ENCODE measurements at regions of chr16 and their contacts with region 1.

Region 1: DNA sequence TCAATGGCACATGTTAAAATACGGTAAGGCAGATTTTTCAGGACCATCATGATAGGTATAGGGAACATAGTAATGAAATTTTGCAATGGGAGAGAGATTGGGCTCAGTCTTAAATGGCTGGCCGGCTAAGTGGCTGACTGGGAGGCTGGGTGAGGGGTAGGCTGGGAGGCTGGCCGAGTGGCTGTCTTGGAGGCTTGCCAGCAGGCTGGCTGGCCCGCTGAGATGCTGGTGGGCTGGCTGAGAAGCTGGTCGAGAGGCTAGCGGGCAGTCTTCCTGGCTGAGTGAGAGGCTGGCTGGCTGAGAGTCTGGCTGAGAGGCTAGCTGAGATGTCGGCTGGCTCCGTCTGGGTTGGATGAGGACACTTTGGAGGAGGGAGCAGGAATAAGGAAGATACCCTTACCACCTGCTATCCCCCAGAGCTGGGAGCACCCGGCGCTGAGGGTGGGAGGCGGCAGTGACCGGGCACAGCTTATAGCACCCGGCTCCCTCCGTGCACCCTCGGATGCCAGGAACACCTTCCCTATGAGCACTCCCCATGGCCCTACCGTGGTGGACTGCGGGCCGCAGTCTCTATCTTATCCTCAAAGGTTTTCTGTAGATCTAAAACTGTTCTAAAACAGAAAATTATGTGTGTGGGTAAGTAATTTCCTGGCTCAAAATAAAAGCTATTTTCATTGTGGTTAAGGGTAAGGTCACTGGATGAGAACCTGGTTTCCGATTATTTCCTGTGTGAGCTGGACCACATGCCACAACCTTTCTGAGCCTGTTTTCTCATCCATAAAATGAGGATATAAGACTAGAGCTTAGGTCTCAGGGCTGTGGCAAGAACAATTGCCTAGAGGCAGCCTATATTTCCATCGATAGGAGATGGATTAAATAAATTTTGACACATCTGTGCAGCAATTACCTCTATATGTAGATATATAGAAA is 34.5 kb upstream of the TMC5 start:
- DNase-seq: peak; percentile 64
- H3K4me3 Mint-ChIP-seq: peak overlapping the region; percentile 22
- H3K27ac Mint-ChIP-seq: peak overlapping the region; percentile 11
- H3K4me1 Mint-ChIP-seq: peaks cover 35% of the 10 kb centered on the region
- H3K27me3 Mint-ChIP-seq: peaks cover 31% of the 10 kb centered on the region

Region 2: GRCh38 chr16:19114352-19115052 is 268.6 kb before region 1 on chr16:
- intact Hi-C with region 1: loop called (anchors 5 kb)
- DNase-seq: peak; percentile 73
- H3K4me3 Mint-ChIP-seq: peak overlapping the region; percentile 87
- H3K27ac Mint-ChIP-seq: peak overlapping the region; percentile 87
- H3K4me1 Mint-ChIP-seq: peaks cover 35% of the 10 kb centered on the region
- H3K27me3 Mint-ChIP-seq: peaks cover 9% of the 10 kb centered on the region

Region 3: DNA sequence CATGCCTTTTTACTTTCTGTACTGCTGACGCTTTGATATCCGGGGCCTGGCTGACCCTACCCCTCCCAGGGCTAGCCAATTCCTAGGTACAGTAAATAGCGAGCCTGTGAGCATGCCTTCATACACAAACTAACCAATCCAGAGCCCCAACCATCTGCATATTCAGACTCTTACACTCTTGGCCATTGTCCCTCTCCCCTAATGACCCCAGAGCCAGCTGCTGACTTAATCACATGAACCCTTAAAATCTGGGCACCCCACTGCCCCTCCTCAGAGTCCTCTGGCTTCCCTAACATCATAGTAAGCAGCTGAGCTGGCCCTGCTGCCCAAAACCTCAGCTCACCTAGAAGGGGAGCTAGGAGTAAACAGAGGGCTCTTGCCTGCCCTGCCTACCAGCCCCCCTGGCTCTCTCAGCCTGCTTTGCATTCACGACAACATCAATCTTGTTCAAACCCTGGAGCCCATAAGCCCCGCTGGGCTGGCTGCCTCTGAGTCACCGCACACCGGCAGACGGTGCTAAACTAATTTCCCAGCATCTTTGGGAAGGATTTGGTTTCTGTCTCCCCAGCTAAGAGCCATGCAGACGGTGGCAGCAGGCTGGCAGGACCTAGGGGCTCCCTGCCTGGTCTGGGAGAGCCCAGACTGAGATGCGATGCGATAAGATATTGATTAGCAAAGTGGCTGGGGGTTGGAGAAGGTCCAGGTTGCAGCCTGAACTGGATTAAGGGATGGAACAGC is 34.4 kb before region 1 on chr16:
- intact Hi-C with region 1: no loop called
- DNase-seq: no peak
- H3K4me3 Mint-ChIP-seq: no peak overlapping the region
- H3K27ac Mint-ChIP-seq: no peak overlapping the region
- H3K4me1 Mint-ChIP-seq: no peaks in the 10 kb centered on the region
- H3K27me3 Mint-ChIP-seq: peaks cover 16% of the 10 kb centered on the region

Region 4: DNA sequence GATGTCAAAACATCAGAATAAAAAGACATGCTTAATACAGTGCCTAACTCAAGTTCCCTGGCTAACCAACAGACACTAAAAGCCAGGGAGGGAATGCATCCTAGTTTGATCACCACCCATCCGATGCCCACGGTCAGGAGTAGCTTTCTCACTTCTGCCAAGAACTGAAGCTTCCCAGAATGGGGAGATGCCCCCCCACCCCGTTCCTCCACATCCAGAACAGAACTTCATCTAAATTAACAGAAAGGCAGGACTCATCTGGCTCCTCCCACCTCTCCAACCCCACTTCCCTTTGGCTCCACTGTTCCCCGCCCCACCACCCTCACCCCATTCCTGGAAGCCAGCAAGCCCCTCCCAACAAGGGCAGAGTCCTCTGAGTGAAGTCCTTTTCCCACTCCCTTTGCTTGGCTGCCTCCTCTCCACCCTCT is 105.1 kb after region 1 on chr16:
- intact Hi-C with region 1: loop called (anchors 2 kb)
- DNase-seq: no peak
- H3K4me3 Mint-ChIP-seq: no peak overlapping the region
- H3K27ac Mint-ChIP-seq: no peak overlapping the region
- H3K4me1 Mint-ChIP-seq: no peaks in the 10 kb centered on the region
- H3K27me3 Mint-ChIP-seq: peaks cover 2% of the 10 kb centered on the region

Measured in activated CD4-positive, alpha-beta T cell treated with anti-CD3 and anti-CD28 coated beads, Interleukin-2, amount 10 ng/mL, durations not matched to agents 24 days and 14 days (primary cell).